Keratinocyte (primary cell): ENCODE measurements at regions of chr9 and their contacts with region 1.

Region 1: GRCh38 chr9:69971643-69972449 is 71.8 kb upstream of the MAMDC2 start:
- DNase-seq: no peak
- H3K4me3 ChIP-seq: no peak overlapping the region
- H3K27ac ChIP-seq: no peak overlapping the region
- H3K4me1 ChIP-seq: peaks cover 14% of the 10 kb centered on the region
- H3K27me3 ChIP-seq: no peaks in the 10 kb centered on the region
- CTCF ChIP-seq: peak; percentile 91 to 94 (median 92)

Region 2: GRCh38 chr9:69476016-69476415 is 495.8 kb before region 1 on chr9:
- dilution Hi-C with region 1: no loop called
- DNase-seq: no peak
- H3K4me3 ChIP-seq: no peak overlapping the region
- H3K27ac ChIP-seq: no peak overlapping the region
- H3K4me1 ChIP-seq: peaks cover 4% of the 10 kb centered on the region
- H3K27me3 ChIP-seq: no peaks in the 10 kb centered on the region
- CTCF ChIP-seq: no peak

Region 3: GRCh38 chr9:70111042-70111602 is 139.3 kb after region 1 on chr9:
- dilution Hi-C with region 1: loop called (anchors 25 kb)
- DNase-seq: no peak
- H3K4me3 ChIP-seq: peak overlapping the region in 2 of 3 experiments; percentile 22 to 48
- H3K27ac ChIP-seq: peak overlapping the region; percentile 69
- H3K4me1 ChIP-seq: peaks cover 39% of the 10 kb centered on the region
- H3K27me3 ChIP-seq: no peaks in the 10 kb centered on the region
- CTCF ChIP-seq: peak; percentile 82 to 96 (median 85)